Posterior vena cava (tissue), 2 donors: ENCODE measurements at regions of chr5 and their contacts with region 1.

Region 1: DNA sequence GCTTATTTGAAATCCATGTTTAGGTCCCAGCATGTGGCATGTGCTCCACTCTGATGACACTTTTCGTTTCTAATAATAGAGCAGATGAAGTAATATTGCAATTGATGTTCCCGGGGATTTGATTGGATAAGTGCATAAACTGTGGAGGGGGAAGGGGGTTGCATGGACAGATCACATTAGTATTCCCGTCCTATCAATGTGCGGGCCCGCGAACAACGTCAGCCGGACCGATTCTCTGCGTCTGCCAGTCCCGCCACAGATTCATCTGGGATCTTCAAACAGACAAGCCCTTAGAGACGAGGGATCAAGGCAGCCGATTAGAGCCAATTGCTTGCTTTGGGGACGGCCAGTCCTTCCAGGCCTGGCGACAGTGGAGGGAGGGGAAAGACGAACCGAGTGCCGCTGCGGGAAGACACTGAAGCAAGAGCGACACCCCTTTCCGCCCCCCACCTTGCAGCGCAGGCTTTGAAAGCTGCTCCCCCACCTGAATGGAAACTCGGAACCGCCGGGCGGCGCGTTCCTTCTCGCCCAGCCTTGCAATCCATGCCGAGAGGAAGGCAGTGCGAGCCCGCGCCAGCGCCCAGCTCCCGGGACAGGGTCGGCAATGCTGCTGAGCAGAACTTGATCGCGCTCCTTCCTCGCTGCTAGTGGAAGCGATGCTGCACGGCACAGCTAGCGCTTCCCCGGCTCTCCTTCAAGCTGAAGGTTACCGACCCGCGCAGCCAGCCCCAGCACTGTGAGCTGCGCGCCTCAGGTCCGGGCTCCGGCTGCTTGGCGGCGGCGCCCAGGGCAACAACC is at the start of gene RGS7BP:
- DNase-seq: peak; percentile 87
- total RNA-seq, gene RGS7BP: 11.7 to 19.3 TPM

Region 2: DNA sequence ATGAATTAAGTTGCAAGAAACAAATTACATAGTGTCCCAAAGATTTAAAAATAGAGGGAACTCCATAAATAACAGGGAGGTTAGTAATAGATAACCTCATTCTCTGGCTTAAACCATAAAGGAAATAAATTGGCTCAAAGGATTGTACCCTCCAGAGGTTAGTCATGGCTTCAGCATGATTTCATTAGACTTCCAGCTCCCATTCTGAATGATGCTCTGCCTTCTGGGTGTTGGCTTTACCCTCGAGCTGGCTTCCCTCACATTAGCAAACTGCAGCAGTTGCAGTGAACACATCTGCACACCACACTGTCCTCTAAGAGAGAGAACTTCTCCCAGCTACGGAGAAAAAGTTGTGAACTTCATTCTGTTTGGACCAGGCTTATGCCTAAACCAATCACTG is 70.3 kb after region 1 on chr5:
- intact Hi-C with region 1: loop called in 1 of 2 experiments (anchors 5 kb)
- DNase-seq: no peak

Region 3: DNA sequence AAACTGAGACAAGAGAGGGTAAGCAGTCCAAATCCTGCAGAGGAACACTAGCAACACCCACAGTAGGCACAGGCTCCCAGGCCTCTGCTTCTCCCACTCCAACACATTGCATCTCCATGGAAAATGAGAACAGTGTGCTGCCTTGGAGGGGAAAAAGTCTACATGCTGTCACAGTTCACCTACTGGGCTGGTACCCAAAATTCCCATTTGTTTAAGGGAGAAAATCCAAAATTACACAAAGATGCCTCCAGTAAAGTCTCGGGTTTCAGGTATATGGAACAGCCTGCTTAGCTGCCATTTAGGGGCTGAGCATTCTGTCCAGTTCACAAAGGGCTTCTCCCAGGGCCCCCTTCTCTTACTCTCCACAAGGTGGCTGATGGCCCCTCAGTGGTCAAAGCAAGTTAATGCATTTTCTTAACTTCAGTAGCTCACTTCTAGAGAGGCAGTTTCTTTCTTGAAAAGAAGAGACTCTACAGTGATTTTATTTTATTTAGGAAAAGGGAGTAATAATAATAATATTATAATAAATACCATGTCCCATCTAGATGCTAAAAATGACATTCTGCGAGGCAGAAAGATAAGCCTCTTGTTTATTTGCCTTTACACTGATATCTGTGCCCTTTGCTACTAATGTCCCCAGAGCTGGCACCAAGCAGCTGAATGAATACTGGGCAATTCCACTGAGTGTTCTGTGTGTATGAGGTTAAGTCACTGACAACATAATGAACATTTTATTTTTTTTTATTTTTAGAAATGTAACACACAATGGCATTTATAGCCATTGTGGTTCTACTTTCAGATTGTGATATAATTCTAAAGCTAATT is 89.3 kb after region 1 on chr5:
- intact Hi-C with region 1: loop called in 1 of 2 experiments (anchors 10 kb)
- DNase-seq: no peak